ENCODE measurements at regions of chr5 and their contacts with region 1.

Region 1: DNA sequence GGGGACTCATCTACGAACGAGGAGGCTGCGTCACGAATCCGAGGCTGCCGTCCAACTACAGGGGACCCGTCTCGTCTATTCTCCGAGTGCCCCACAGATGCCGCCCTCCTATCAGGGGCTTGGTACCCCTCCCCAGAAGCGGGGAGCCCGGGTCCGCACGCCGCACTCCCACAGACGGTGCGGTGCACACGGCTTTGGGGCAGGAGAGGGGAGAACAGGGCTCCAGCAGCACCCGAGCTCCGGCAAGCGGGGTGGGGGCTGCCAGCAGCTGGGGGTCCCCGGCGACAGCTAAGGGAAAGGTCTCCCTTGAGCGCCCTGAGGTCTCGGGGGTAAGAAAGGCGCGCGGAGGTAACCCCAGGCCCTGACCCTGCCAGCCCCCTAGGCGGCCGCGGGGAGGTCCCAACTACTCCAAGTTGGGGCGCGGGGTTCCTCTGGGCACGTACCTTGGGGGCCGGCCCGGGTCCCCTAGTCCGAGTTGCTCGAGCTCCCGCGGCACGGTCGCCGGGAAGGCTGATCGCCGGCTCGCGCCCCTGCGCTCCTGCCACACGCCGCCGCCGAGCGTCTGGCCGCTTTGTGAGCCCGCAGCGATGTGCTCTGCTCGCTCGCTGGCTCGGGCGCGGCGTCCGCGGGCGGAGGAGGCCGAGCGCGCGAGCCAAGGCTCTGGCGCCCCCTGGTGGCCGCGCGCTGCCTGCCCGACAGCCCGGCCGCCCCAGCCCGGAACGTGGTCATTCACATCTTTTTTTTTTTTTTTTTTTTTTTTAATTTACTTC is at the start of gene SPOCK1:
- DNase-seq: peak; percentile 46 to 95 (median 80)
- ATAC-seq: peak; percentile 98 to 99 (median 99)
- H3K4me3 ChIP-seq: peak within 1 kb of the TSS in 3 of 4 donors; percentile 28 to 45 (median 31)
- H3K27ac ChIP-seq: no peak within 1 kb of the TSS
- H3K4me1 ChIP-seq: peaks cover 0 to 4% (median 0%) of the 10 kb centered on the region in 3 donors
- H3K27me3 ChIP-seq: peaks cover 0 to 8% (median 0%) of the 10 kb centered on the region in 4 donors
- CTCF ChIP-seq: peak; percentile 77 to 89 (median 86)
- total RNA-seq, gene SPOCK1: 1.7 to 16.5 (median 7.2) TPM

Region 2: DNA sequence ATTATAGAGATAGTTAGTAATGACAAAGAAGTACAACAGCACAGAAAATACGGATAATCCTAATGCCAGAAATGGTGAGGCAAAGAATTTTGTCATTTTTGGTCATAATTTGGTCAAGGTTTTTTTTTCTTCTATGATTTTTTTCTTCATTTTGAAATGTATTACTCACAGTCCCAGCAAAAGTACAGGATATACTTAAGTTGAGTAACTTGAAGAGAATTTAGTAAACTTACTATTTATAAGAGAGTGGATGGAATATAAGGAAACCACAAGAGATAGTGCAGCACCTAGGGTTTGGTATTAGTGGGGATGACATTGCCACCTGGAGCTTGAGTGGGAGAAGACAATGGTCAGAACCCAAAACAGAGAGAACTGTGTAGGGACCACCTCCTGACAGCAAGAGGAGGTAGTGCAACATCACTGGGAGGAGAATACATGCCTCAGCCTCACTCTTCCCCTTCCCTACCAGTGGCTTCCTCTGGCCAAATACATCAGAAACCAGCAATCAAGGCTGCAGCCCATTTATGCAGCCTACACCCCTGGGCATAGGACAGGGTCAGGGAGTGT is 699.0 kb before region 1 on chr5:
- intact Hi-C with region 1: loop called in 1 of 3 experiments (anchors 10 kb)
- DNase-seq: no peak
- ATAC-seq: no peak
- H3K4me3 ChIP-seq: no peak overlapping the region
- H3K27ac ChIP-seq: no peak overlapping the region
- H3K4me1 ChIP-seq: no peaks in the 10 kb centered on the region
- H3K27me3 ChIP-seq: no peaks in the 10 kb centered on the region
- CTCF ChIP-seq: no peak

Region 3: DNA sequence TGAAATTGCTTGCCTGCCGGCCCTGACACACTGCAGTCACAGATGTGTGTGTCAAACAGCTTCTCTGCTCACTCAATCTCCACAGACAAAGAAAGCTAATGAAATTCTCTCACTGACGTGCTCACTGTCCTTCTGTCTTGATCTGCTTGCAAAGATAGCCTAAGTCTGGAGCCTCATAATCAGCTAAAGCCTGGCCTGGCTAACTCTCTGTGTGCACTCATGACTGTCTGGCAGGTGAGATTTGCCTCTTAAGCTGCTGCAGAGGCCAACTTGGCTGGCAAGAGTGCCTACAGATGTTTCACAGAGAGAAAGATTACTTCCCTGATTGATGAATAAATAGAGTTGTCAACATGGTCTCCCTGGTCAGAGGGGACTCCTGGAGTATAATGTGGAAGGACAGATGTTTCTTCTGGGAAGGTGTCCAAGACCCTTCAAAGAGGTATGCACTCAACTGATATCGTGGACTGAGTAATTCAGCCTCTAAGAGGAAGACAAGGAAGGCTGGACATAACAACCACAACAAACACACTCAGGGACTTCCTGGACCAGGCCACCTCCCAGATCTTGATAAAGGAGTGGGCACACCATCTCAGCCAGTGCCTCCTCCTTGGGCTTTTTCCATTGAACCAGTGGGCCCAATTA is 361.8 kb before region 1 on chr5:
- intact Hi-C with region 1: no loop called
- DNase-seq: no peak
- ATAC-seq: peak in 3 of 4 donors; percentile 40 to 64 (median 61)
- H3K4me3 ChIP-seq: no peak overlapping the region
- H3K27ac ChIP-seq: no peak overlapping the region
- H3K4me1 ChIP-seq: peaks cover 0 to 7% (median 0%) of the 10 kb centered on the region in 3 donors
- H3K27me3 ChIP-seq: no peaks in the 10 kb centered on the region
- CTCF ChIP-seq: no peak

Region 4: GRCh38 chr5:137310051-137310730 is 188.7 kb before region 1 on chr5:
- intact Hi-C with region 1: loop called in 1 of 3 experiments (anchors 10 kb)
- DNase-seq: no peak
- ATAC-seq: no peak
- H3K4me3 ChIP-seq: no peak overlapping the region
- H3K27ac ChIP-seq: no peak overlapping the region
- H3K4me1 ChIP-seq: peaks cover 5 to 7% (median 7%) of the 10 kb centered on the region in 3 donors
- H3K27me3 ChIP-seq: no peaks in the 10 kb centered on the region
- CTCF ChIP-seq: no peak

Region 5: DNA sequence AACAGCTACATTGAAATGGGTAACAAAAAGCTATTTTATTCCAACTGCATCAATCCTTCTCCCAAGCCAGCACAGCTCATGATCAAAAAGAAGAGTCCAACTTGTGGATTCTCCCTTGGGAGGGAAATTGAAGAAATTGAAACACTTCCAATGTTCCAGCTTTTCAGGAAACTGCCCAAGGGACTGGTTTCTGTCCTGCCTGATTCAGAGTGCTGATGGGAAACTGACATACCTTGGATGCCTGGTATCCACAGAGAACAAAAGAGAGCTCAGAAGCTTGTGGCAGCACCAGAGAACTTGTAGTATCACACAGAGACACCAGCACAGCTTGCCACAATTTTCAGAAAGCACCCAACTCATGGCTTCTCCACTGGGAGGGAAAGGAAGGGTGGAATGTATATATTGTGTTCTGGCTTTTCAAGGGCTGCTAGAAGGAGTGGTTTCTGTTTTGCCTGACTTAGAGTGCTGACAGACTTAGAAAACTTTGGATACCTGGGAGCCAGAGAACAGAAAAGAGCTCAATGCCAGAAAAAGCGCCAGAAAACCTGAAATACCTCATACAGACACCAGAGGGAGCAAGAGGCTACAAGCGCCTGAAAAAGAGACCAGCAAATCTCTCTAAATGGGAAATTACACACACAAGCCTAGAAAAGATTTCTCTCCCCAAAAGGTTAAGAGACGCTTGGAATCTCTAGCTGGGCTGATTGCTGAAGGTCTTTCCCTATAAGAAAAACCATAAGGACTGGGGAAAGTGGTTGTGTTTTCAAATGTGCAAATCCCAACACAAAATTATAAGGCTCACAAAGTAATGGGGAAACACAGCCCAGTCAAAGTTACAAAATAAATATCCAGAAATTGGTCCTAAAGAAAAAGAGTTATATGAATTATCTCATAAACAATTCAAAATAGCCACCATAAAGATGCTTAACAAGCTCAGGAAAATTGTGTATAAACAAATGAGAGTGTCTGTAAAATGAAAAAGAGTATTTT is 178.6 kb before region 1 on chr5:
- intact Hi-C with region 1: loop called in 2 of 3 experiments (anchors 10 kb)
- DNase-seq: peak in 2 of 6 donors; percentile 25 to 72
- ATAC-seq: peak; percentile 65 to 89 (median 82)
- H3K4me3 ChIP-seq: no peak overlapping the region
- H3K27ac ChIP-seq: no peak overlapping the region
- H3K4me1 ChIP-seq: peaks cover 11 to 16% (median 15%) of the 10 kb centered on the region in 3 donors
- H3K27me3 ChIP-seq: no peaks in the 10 kb centered on the region
- CTCF ChIP-seq: peak; percentile 70 to 80 (median 74)

Region 6: DNA sequence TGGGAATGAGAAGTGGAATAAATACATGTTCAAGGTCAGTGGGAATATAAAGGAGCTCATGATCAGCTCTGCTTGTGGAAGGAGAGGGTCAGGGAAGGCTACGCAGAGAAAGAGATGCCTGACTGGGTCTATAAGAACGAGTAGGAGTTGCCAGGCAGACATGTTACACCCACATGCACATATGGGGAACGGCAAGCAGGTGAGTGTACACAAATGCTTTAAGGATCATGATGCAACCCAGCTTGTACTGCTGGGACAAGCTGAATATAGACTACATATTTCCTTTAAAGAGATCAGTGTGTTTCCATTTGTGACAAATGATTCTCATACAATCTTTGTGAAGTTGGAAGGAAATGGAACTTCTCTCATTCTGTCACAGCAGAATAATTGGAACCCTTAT is 141.5 kb before region 1 on chr5:
- intact Hi-C with region 1: loop called in 1 of 3 experiments (anchors 10 kb)
- DNase-seq: no peak
- ATAC-seq: no peak
- H3K4me3 ChIP-seq: no peak overlapping the region
- H3K27ac ChIP-seq: no peak overlapping the region
- H3K4me1 ChIP-seq: no peaks in the 10 kb centered on the region
- H3K27me3 ChIP-seq: peaks cover 0 to 4% (median 0%) of the 10 kb centered on the region in 4 donors
- CTCF ChIP-seq: no peak

Measured in pancreas (tissue), 10 donors.